Ascending aorta (tissue), 2 donors: ENCODE measurements at regions of chr11 and their contacts with region 1.

Region 1: GRCh38 chr11:111766093-111766833 is at the start of gene PPP2R1B:
- DNase-seq: peak in 1 of 2 donors; percentile 80
- H3K4me3 ChIP-seq: peak within 1 kb of the TSS; percentile 85 to 98
- H3K27ac ChIP-seq: peak within 1 kb of the TSS; percentile 89
- H3K4me1 ChIP-seq: peaks cover 6 to 17% of the 10 kb centered on the region in 2 donors
- H3K27me3 ChIP-seq: no peaks in the 10 kb centered on the region
- CTCF ChIP-seq: no peak
- total RNA-seq, gene PPP2R1B: 7.7 TPM

Region 2: DNA sequence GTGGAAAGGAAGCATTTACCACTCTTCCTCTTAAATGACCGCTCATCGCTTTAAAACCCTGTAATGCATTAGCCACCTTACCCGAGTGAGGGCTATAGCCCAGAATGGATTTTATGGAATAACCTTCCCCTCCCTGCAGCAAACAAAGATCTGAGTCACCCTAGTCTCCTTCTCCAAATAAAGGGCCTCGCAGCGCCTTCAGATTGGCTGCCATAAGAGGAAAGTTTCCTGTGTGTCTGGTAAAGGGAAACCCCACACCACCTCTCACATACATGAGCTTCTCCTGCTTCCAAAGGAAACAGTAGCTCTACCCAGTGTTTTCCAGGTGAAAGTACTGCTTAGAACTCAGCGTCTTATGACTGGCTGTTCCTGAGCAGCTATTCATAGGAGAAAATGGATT is 47.8 kb before region 1 on chr11:
- intact Hi-C with region 1: loop called (anchors 10 kb)
- DNase-seq: peak in 1 of 2 donors; percentile 75
- H3K4me3 ChIP-seq: peak overlapping the region in 1 of 2 donors; percentile 10
- H3K27ac ChIP-seq: peak overlapping the region; percentile 54 to 61
- H3K4me1 ChIP-seq: peaks cover 4 to 10% of the 10 kb centered on the region in 2 donors
- H3K27me3 ChIP-seq: no peaks in the 10 kb centered on the region
- CTCF ChIP-seq: no peak

Region 3: GRCh38 chr11:111735262-111736116 is 30.8 kb before region 1 on chr11:
- intact Hi-C with region 1: loop called (anchors 2 kb)
- DNase-seq: peak; percentile 47 to 95
- H3K4me3 ChIP-seq: peak overlapping the region; percentile 29 to 55
- H3K27ac ChIP-seq: peak overlapping the region; percentile 91 to 97
- H3K4me1 ChIP-seq: peaks cover 41 to 76% of the 10 kb centered on the region in 2 donors
- H3K27me3 ChIP-seq: no peaks in the 10 kb centered on the region
- CTCF ChIP-seq: no peak

Region 4: GRCh38 chr11:111788051-111788450 is 21.8 kb after region 1 on chr11:
- intact Hi-C with region 1: no loop called
- DNase-seq: no peak
- H3K4me3 ChIP-seq: no peak overlapping the region
- H3K27ac ChIP-seq: peak overlapping the region in 1 of 2 donors; percentile 24
- H3K4me1 ChIP-seq: no peaks in the 10 kb centered on the region
- H3K27me3 ChIP-seq: no peaks in the 10 kb centered on the region
- CTCF ChIP-seq: no peak